ENCODE measurements at regions of chr19 and their contacts with region 1.

Region 1: GRCh38 chr19:48613024-48613776 is 1.7 kb downstream of the FAM83E start:
- DNase-seq: peak in 1 of 2 donors; percentile 81
- ATAC-seq: peak; percentile 57 to 78
- H3K4me3 ChIP-seq: peak overlapping the region in 2 of 4 donors; percentile 10 to 37
- H3K27ac ChIP-seq: peak overlapping the region; percentile 78 to 89 (median 84)
- H3K4me1 ChIP-seq: peaks cover 26 to 43% of the 10 kb centered on the region in 2 donors
- H3K27me3 ChIP-seq: no peaks in the 10 kb centered on the region
- CTCF ChIP-seq: no peak
- POLR2A ChIP-seq: no peak

Region 2: DNA sequence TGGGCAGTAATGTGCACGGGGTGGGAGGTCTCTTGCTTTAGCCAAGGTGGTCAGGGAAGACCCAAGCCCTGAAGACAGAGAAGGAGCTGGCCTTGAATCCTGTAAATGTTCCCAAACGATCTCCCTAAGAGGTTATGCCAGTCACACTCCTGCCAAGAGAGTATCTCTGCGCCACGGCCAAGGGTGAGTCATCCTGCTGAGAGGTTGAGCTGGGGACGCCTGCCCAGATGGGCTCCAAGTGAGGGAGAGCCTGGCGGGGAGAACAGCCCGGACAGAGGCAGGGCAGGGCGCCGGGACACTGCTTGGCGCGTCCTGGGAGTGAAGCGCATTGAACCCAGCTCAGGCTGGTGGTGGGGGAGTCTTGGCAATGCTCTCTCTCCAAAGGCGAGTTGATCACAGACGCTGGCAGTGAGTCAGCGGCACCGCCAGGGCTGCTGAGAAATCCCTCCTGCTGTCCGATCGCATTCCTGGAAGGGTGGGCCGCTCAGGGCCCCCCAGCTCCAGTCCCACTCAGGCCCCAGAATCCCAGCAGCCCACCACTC is 44.8 kb before region 1 on chr19:
- in situ Hi-C with region 1: no loop called
- intact Hi-C with region 1: loop called (anchors 1 kb)
- DNase-seq: peak; percentile 92 to 96
- ATAC-seq: peak; percentile 90 to 92
- H3K4me3 ChIP-seq: peak overlapping the region in 1 of 4 donors; percentile 27
- H3K27ac ChIP-seq: peak overlapping the region; percentile 81 to 92 (median 88)
- H3K4me1 ChIP-seq: peaks cover 11 to 16% of the 10 kb centered on the region in 2 donors
- H3K27me3 ChIP-seq: no peaks in the 10 kb centered on the region
- CTCF ChIP-seq: no peak
- POLR2A ChIP-seq: peak; percentile 11 to 32

Region 3: DNA sequence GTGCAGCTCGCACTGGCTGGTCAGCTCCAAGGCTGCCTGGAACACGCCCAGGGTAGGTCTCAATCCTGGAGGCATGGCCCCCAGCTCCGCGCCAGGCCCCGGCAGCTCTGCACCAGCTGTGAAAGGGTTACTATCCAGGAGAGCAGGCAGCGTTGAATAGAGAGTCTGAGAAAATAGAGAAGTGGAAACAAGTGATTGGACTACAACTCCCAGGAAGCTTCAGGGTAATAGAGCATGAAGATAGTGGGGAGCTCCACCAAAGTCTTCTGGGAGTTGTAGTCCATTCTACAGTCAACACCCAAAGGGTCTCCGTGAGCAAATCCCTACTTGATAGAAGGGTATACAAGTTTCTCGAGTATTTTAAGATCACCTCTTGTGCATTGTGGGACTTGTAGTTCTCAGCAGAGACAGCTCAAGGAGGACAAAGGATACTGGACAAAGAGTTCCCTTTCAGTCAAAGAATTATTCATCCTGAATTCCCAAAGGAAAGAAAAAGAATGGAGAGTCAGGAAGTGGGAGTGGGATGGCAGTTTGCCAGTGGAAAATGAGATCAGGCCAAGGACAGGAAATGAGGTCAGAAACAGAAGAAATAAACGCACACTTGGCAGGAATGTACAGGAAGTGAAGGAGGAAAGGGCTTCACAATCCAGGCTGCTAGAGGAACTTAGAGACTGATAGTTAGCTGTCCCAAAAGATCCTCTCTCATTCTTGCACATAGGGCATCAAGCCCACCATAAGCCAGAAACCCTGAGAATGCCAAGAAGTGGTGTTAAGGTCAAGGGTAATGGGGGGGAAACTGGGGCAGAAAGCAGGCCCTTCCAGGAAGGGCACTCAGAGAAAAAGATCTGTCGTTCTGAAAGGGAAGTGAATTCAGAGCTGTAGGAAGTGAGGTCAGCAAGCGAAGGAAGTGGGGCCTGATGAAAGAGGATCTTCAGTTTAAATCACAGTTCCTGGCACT is 111.9 kb after region 1 on chr19:
- in situ Hi-C with region 1: no loop called
- intact Hi-C with region 1: no loop called
- DNase-seq: peak in 1 of 2 donors; percentile 48
- ATAC-seq: peak; percentile 15 to 37
- H3K4me3 ChIP-seq: no peak overlapping the region
- H3K27ac ChIP-seq: peak overlapping the region; percentile 63 to 85 (median 78)
- H3K4me1 ChIP-seq: peaks cover 9 to 20% of the 10 kb centered on the region in 2 donors
- H3K27me3 ChIP-seq: no peaks in the 10 kb centered on the region
- CTCF ChIP-seq: no peak
- POLR2A ChIP-seq: no peak

Region 4: DNA sequence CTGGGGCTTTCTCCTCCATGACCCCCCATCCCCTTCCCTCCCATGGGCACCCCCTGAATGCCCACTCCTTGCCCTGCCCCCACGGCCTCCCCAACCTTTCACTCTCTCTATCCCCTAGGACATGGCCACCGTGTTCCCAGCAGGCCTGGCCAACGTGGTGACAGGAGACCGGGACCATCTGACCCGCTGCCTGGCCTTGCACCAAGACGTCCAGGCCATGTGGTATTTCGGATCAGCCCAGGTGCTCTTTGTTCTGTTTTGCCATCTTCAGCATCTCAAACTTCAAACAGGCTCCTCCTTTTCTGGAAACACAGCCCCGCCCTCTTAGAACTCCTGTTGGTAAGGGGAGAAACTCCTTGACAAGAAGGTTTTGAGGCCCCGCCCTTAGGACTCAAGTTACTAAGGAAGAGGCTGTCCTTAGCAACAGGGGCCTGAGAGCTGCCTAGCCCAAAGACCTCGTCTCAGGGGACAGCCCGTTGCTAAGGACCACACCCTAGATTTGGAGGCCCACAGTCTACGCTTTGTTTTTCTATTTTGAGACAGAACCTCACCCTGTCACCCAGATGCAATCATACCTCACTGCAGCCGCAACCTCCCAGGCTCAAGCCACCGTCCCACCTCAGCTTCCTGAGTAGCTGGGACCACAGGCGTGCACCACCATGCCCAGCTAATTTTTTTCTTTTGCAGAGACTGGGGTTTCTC is 855.7 kb after region 1 on chr19:
- in situ Hi-C with region 1: no loop called
- intact Hi-C with region 1: no loop called
- DNase-seq: peak; percentile 51 to 88
- ATAC-seq: peak; percentile 71 to 88
- H3K4me3 ChIP-seq: no peak overlapping the region
- H3K27ac ChIP-seq: peak overlapping the region; percentile 56 to 72 (median 66)
- H3K4me1 ChIP-seq: peaks cover 0 to 11% of the 10 kb centered on the region in 2 donors
- H3K27me3 ChIP-seq: no peaks in the 10 kb centered on the region
- CTCF ChIP-seq: no peak
- POLR2A ChIP-seq: no peak